Activated B cell treated with CpG ODN at 0.5 μM for 24 hours (primary cell): ENCODE measurements at regions of chr7 and their contacts with region 1.

Region 1: DNA sequence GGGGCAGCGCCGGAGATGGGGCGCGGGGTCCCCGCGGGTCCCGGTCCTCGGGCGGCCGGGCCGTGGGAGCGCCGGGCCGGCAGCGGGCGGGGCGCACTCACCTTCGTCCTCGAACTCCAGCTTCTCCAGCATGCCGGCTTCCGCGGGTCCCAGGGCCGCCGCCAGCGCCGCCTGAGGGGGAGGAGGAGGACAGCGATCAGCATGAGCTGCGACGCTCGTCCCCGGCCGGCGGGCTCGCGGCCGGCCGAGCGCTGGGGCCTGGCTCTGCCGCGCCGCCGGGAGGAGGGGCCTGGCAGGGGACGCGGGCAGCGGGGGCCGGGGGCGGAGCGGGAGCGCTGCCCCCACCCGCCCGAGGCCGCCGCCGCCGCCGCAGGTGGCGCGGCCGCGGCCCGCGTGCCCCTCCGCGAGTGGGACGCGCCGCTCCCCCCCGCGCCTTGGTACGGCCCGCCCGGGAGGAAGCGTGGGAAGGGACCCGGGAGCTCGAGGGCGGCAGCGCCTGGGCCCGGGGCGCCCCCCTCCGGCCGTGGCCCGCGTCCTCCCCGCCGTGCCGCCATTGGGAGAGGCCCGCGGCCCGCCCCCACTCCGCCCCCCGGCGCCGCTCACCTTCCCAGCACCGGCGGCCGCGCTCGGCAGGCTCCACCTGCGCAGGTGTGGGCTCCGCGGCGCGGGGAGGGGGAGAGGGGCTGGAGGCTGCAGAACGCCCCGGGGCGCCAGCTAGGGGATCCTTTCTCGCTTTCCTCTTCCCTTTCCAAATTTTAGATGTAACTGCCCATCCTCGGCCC is 112.5 kb upstream of the RHEB start:
- DNase-seq: peak; percentile 93
- ATAC-seq: peak; percentile 76
- H3K4me3 Mint-ChIP-seq: peak overlapping the region; percentile 96
- H3K27ac Mint-ChIP-seq: peak overlapping the region; percentile 98
- H3K4me1 Mint-ChIP-seq: peaks cover 15% of the 10 kb centered on the region
- H3K27me3 Mint-ChIP-seq: no peaks in the 10 kb centered on the region
- CTCF ChIP-seq: no peak

Region 2: GRCh38 chr7:151232091-151232916 is 399.9 kb before region 1 on chr7 and contains the start of gene CHPF2:
- CTCF ChIA-PET with region 1: no interaction called
- POLR2A ChIA-PET with region 1: interaction called, 3 read pairs
- intact Hi-C with region 1: loop called (anchors 1 kb)
- DNase-seq: peak; percentile 85
- ATAC-seq: peak; percentile 93
- H3K4me3 Mint-ChIP-seq: peak within 1 kb of the TSS; percentile 99
- H3K27ac Mint-ChIP-seq: peak within 1 kb of the TSS; percentile 96
- H3K4me1 Mint-ChIP-seq: peaks cover 35% of the 10 kb centered on the region
- H3K27me3 Mint-ChIP-seq: no peaks in the 10 kb centered on the region
- CTCF ChIP-seq: no peak
- total RNA-seq, gene CHPF2: 32.4 and 41.2 TPM in 2 replicates

Region 3: GRCh38 chr7:151381348-151382078 is 250.6 kb before region 1 on chr7:
- CTCF ChIA-PET with region 1: no interaction called
- POLR2A ChIA-PET with region 1: no interaction called
- intact Hi-C with region 1: loop called (anchors 1 kb)
- DNase-seq: peak; percentile 57
- ATAC-seq: peak; percentile 78
- H3K4me3 Mint-ChIP-seq: peak overlapping the region; percentile 83
- H3K27ac Mint-ChIP-seq: peak overlapping the region; percentile 61
- H3K4me1 Mint-ChIP-seq: peaks cover 26% of the 10 kb centered on the region
- H3K27me3 Mint-ChIP-seq: peaks cover 2% of the 10 kb centered on the region
- CTCF ChIP-seq: no peak

Region 4: GRCh38 chr7:151570366-151570915 is 61.7 kb before region 1 on chr7:
- CTCF ChIA-PET with region 1: no interaction called
- POLR2A ChIA-PET with region 1: no interaction called
- intact Hi-C with region 1: loop called (anchors 5 kb)
- DNase-seq: no peak
- ATAC-seq: no peak
- H3K4me3 Mint-ChIP-seq: no peak overlapping the region
- H3K27ac Mint-ChIP-seq: no peak overlapping the region
- H3K4me1 Mint-ChIP-seq: no peaks in the 10 kb centered on the region
- H3K27me3 Mint-ChIP-seq: no peaks in the 10 kb centered on the region
- CTCF ChIP-seq: no peak

Region 5: GRCh38 chr7:151876899-151877777 is 245.0 kb after region 1 on chr7 and contains the start of gene PRKAG2:
- CTCF ChIA-PET with region 1: interaction called, 3 read pairs
- POLR2A ChIA-PET with region 1: interaction called, 8 read pairs
- intact Hi-C with region 1: loop called (anchors 1 kb)
- DNase-seq: peak; percentile 75
- ATAC-seq: peak; percentile 60
- H3K4me3 Mint-ChIP-seq: peak within 1 kb of the TSS; percentile 97
- H3K27ac Mint-ChIP-seq: peak within 1 kb of the TSS; percentile 91
- H3K4me1 Mint-ChIP-seq: peaks cover 15% of the 10 kb centered on the region
- H3K27me3 Mint-ChIP-seq: no peaks in the 10 kb centered on the region
- CTCF ChIP-seq: no peak
- total RNA-seq, gene PRKAG2: 19.7 TPM in 2 replicates

Region 6: DNA sequence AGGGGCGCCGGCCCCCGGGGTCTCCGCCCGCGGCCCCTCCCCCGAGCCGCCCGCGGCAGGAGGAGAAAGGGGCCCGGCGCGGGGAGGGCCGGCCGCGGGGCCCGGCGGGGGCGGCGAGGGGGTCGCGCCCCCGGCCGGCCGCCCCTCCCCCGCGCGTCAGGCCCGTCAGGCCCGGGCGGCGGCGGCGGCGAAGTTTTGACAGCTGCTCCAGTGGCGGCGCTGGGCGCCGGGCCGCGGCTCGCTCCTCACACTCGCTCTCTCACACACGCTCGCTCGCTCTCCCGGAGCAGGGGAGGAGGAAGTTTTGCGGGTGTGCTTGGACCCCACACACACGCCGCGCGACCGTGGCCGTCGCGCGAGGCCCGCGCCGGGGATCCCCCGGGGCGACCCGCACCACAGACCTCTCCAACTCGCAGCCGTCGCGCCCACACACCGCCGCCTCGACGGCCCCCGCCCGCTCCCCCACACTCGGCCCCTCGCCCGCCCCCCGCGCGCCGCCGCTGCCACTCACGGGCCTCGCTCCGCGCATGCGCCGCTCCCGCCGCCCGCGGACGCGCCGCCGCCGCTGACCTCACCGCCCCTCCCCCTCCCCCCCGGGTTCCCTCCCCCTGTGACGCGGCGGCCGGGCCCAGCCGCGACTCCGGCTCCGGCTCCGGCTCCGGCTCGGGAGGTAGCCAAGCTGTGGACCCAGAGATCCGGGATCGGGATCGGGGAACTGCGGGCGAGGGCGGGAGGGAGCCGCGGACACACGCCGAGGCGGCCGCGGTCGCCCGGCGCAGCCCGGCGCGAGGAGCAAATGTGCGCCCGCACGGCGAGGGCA is 804.2 kb after region 1 on chr7:
- CTCF ChIA-PET with region 1: no interaction called
- POLR2A ChIA-PET with region 1: no interaction called
- intact Hi-C with region 1: loop called (anchors 2 kb)
- DNase-seq: peak; percentile 85
- ATAC-seq: peak; percentile 64
- H3K4me3 Mint-ChIP-seq: peak overlapping the region; percentile 83
- H3K27ac Mint-ChIP-seq: peak overlapping the region; percentile 84
- H3K4me1 Mint-ChIP-seq: peaks cover 29% of the 10 kb centered on the region
- H3K27me3 Mint-ChIP-seq: no peaks in the 10 kb centered on the region
- CTCF ChIP-seq: no peak